HAP-1 (cell line): ENCODE measurements at regions of chr15 and their contacts with region 1.

Region 1: DNA sequence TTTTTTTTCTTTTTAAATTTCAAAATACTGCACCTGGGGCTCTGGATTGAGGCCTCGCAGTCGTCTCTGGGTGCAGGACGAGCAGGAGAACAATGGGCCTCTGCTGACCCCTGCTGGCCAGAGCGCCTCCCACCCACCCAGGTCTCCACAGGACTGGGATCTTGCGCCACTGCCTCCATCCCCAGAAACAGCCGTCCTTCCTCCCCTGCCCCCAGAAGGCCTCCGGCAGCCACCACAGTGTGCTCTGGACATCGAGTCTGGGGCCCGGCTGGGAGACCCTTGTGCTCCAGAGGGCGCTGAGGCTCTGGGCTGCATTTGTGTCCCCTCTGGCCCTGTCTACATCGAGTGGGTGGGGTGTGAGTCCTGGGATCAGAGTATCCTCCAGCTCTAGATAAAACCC is 6.6 kb upstream of the ACSBG1 start:
- DNase-seq: peak; percentile 94 to 99
- H3K4me3 ChIP-seq: no peak overlapping the region
- H3K4me1 ChIP-seq: no peaks in the 10 kb centered on the region
- H3K27me3 ChIP-seq: no peaks in the 10 kb centered on the region; the same call in 1 of the 2 replicates

Region 2: DNA sequence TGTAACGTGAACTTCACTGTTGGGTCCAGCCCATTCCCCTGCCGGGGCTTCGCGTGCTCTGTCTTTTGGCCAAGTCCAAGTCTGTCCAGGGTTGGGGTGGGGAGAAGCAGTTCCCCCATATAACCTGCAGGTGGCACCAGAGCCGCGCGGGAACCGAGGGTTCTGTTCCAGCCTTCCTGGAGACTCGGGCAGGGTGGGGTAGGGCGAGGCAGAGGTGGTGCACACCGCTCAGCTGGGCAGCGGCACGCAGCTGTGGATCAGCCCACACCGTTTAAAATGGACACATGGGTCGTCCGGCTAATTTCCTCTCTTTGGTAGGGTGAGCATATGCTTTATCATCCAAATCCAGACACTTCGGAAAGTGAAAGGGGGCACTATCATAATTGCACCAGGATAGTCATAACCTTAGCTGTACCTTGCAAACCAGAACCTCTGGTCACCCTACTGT is 281.6 kb before region 1 on chr15:
- in situ Hi-C with region 1: loop called (anchors 5 kb)
- DNase-seq: peak; percentile 89 to 97
- H3K4me3 ChIP-seq: no peak overlapping the region
- H3K4me1 ChIP-seq: peaks cover 7% of the 10 kb centered on the region
- H3K27me3 ChIP-seq: peaks cover 19% of the 10 kb centered on the region

Region 3: DNA sequence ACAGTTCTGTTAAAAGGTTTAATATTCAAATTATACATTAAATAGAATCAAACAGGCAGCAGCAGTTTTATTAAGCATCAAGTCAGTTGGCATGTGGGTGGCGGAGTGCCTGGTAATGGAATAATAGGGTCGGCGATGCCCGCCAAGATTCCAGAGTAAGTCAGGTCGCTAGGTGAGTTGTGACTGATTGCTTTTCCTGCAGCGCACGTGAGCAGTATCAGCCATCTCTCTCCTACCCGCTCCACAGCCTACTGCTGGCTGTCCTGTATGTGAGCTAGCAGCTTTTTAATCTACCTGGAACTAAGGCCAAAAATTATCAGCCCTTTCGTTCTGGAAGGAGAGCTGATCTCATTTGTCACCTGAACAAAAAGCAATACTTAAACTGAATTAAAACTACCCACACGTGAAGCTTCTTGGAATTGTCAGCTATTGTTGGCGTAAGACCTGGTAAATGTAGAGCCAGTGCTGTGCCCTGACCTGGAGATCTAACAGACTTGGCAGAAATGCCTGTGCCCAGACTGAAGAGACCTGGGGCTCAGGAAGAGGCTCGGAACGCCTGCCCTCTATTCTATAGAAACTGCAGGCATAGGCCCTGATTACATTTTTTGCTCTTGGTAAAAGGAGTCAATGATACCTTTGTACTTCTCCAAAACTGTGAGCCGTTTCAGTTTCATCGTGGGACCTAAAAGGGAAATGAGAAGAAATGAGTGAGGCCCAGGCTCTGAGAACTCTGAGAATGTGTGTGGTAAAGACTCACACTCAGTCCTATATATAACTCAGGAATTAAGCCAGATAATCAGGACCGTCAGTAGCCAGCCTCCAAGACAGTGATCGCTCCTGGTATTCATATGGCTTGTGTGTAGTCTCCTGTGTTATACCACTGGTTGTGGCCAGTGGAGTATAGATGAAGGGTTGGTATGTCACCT is 69.9 kb before region 1 on chr15:
- in situ Hi-C with region 1: loop called (anchors 5 kb)
- DNase-seq: no peak
- H3K4me3 ChIP-seq: no peak overlapping the region
- H3K4me1 ChIP-seq: no peaks in the 10 kb centered on the region
- H3K27me3 ChIP-seq: no peaks in the 10 kb centered on the region